ENCODE measurements at regions of chr10 and their contacts with region 1.

Region 1: GRCh38 chr10:4767033-4767814 is 58.8 kb upstream of the AKR1E2 start:
- DNase-seq: peak; percentile 74
- H3K4me3 ChIP-seq: no peak overlapping the region
- H3K27ac ChIP-seq: peak overlapping the region; percentile 96
- H3K4me1 ChIP-seq: peaks cover 83% of the 10 kb centered on the region
- H3K27me3 ChIP-seq: no peaks in the 10 kb centered on the region
- CTCF ChIP-seq: peak; percentile 49 to 50
- POLR2A ChIP-seq: no peak

Region 2: GRCh38 chr10:3452173-3452626 is 1315.0 kb before region 1 on chr10:
- CTCF ChIA-PET with region 1: no interaction called
- POLR2A ChIA-PET with region 1: no interaction called
- dilution Hi-C with region 1: no loop called
- intact Hi-C with region 1: loop called (anchors 2 kb)
- DNase-seq: peak; percentile 85
- H3K4me3 ChIP-seq: no peak overlapping the region
- H3K27ac ChIP-seq: peak overlapping the region; percentile 98
- H3K4me1 ChIP-seq: peaks cover 43% of the 10 kb centered on the region
- H3K27me3 ChIP-seq: no peaks in the 10 kb centered on the region
- CTCF ChIP-seq: peak; percentile 30 to 40
- POLR2A ChIP-seq: no peak

Region 3: GRCh38 chr10:3887885-3888476 is 879.2 kb before region 1 on chr10:
- CTCF ChIA-PET with region 1: interaction called, 3 read pairs
- POLR2A ChIA-PET with region 1: no interaction called
- dilution Hi-C with region 1: no loop called
- intact Hi-C with region 1: loop called (anchors 1 kb)
- DNase-seq: peak; percentile 97
- H3K4me3 ChIP-seq: peak overlapping the region in 1 of 3 experiments; percentile 22
- H3K27ac ChIP-seq: peak overlapping the region; percentile 100
- H3K4me1 ChIP-seq: peaks cover 56% of the 10 kb centered on the region
- H3K27me3 ChIP-seq: no peaks in the 10 kb centered on the region
- CTCF ChIP-seq: no peak
- POLR2A ChIP-seq: peak; percentile 65

Region 4: DNA sequence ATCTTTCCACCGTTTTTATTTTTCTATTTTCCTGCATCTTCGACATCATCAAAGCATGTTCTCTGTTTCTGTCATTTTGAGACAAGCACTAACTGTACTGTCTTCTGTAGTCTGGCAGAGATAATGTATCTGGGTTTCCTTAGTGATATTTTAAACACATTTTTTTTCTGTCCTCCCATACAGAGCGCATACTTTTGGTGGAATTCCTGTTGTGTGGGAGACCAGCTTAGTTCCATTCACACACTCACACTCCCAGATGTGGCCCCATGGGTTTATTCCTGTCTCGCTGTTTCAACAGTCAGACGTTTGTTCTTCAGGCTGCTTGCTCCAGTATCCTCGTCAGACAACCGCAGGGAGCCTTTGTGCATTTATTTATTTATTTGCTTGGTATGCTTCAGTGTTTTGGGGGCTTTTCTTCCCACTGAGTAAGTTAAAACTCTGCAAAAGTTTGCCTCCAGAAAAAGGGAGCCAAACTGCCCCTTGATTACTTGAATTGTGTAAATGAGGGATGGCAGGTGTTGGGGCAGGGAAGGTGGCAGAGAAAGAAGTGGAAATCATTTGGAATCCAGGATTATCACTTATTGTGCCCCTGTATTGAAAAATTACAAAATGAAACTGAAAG is 525.4 kb before region 1 on chr10:
- CTCF ChIA-PET with region 1: interaction called, 3 read pairs
- POLR2A ChIA-PET with region 1: no interaction called
- dilution Hi-C with region 1: no loop called
- intact Hi-C with region 1: loop called (anchors 1 kb)
- DNase-seq: peak; percentile 89
- H3K4me3 ChIP-seq: peak overlapping the region in 1 of 3 experiments; percentile 63
- H3K27ac ChIP-seq: peak overlapping the region; percentile 99
- H3K4me1 ChIP-seq: peaks cover 50% of the 10 kb centered on the region
- H3K27me3 ChIP-seq: no peaks in the 10 kb centered on the region
- CTCF ChIP-seq: no peak
- POLR2A ChIP-seq: no peak

Region 5: GRCh38 chr10:4512671-4513240 is 254.5 kb before region 1 on chr10:
- CTCF ChIA-PET with region 1: interaction called, 6 read pairs
- POLR2A ChIA-PET with region 1: no interaction called
- dilution Hi-C with region 1: no loop called
- intact Hi-C with region 1: loop called (anchors 2 kb)
- DNase-seq: peak; percentile 54
- H3K4me3 ChIP-seq: no peak overlapping the region
- H3K27ac ChIP-seq: no peak overlapping the region
- H3K4me1 ChIP-seq: no peaks in the 10 kb centered on the region
- H3K27me3 ChIP-seq: no peaks in the 10 kb centered on the region
- CTCF ChIP-seq: peak; percentile 36 to 43
- POLR2A ChIP-seq: no peak

Region 6: DNA sequence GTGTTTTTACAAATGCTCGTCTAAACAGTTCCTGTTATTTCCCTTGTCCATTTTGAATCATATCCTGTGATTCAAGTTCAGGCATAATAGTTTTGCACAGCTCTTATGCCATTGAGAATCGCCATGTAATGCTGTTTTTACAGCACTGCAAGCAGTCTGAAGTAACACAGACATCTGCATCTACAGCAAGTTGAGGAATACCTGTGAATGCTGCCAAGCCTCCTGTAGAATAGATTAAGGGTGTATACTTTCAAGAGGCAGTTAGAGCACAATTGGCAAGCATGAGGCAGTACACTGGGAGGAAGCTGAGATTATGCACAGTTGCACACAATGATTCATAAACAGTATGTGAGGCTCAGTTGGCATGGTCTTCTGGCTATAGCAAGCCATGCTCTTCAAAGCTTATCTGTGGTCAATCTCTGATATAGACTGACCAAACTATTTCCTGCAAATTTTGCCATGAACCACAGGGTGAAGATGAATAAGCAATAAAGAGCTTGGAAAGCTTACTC is 63.1 kb before region 1 on chr10:
- CTCF ChIA-PET with region 1: interaction called, 14 read pairs
- POLR2A ChIA-PET with region 1: interaction called, 3 read pairs
- dilution Hi-C with region 1: no loop called
- intact Hi-C with region 1: loop called (anchors 1 kb)
- DNase-seq: peak; percentile 98
- H3K4me3 ChIP-seq: no peak overlapping the region
- H3K27ac ChIP-seq: peak overlapping the region; percentile 92
- H3K4me1 ChIP-seq: peaks cover 45% of the 10 kb centered on the region
- H3K27me3 ChIP-seq: no peaks in the 10 kb centered on the region
- CTCF ChIP-seq: no peak
- POLR2A ChIP-seq: peak; percentile 13

Region 7: GRCh38 chr10:4719036-4719435 is 48.2 kb before region 1 on chr10:
- CTCF ChIA-PET with region 1: no interaction called
- POLR2A ChIA-PET with region 1: no interaction called
- dilution Hi-C with region 1: no loop called
- intact Hi-C with region 1: no loop called
- DNase-seq: no peak
- H3K4me3 ChIP-seq: no peak overlapping the region
- H3K27ac ChIP-seq: no peak overlapping the region
- H3K4me1 ChIP-seq: no peaks in the 10 kb centered on the region
- H3K27me3 ChIP-seq: no peaks in the 10 kb centered on the region
- CTCF ChIP-seq: no peak
- POLR2A ChIP-seq: no peak

Measured in endothelial cell of umbilical vein (primary cell).